ENCODE measurements at regions of chr3 and their contacts with region 1.

Region 1: GRCh38 chr3:115503394-115503793 is 119.9 kb upstream of the GAP43 start:
- DNase-seq: no peak
- CTCF ChIP-seq: no peak

Region 2: GRCh38 chr3:115146059-115146430 is 357.3 kb before region 1 on chr3:
- CTCF ChIA-PET with region 1: no interaction called
- POLR2A ChIA-PET with region 1: no interaction called
- DNase-seq: peak; percentile 19
- CTCF ChIP-seq: no peak

Region 3: DNA sequence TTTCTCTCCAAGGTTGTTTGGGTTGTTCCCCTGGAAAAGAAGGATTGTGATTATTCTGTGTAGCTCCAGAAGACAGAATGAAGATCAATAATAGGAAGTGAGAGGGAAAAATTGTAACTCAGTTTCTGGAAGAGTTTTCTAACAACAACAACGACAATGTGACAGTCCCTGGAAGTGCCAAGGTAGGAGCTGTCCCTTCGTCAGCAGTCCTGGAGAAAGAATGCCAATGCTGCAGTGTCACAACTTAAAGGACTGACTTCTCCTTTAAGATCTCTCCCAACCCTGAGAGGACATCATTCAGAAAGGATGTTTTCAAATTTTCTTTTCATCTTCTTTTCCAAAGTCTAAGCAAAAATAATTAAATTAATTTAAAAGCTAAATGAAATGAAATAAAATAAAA is 16.5 kb before region 1 on chr3:
- CTCF ChIA-PET with region 1: interaction called, 12 read pairs
- POLR2A ChIA-PET with region 1: no interaction called
- DNase-seq: no peak
- CTCF ChIP-seq: no peak

Measured in GM10248 (cell line).